Caco-2 (cell line): ENCODE measurements at regions of chr16 and their contacts with region 1.

Region 1: DNA sequence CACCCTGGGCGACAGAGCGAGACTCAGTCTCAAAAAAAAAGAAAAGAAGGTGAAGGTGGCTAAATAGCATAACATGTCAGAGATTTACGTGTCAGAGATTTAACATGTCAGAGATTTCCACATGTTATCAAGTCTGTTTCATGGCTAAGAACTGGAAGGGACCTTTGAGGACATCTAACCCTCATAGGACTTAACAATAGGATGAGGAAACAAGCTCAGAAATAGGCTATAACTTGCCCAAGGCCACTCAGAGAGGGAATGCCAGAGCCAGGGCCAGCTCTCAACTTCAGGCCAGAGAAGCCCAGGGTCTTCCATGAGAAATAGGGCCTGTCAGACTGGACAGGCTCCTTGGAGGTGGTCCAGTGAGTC is 26.8 kb upstream of the ZNF629 start:
- DNase-seq: no peak
- H3K4me3 ChIP-seq: peak overlapping the region; percentile 40
- H3K4me3 Mint-ChIP-seq: peak overlapping the region; percentile 95
- H3K27ac Mint-ChIP-seq: peak overlapping the region; percentile 97
- H3K4me1 ChIP-seq: 0 out of 2 replicates have a peak, but pooled peaks cover 4% of the 10 kb centered on the region
- H3K4me1 Mint-ChIP-seq: no peaks in the 10 kb centered on the region
- H3K27me3 ChIP-seq: no peaks in the 10 kb centered on the region
- H3K27me3 Mint-ChIP-seq: no peaks in the 10 kb centered on the region
- CTCF ChIP-seq: no peak

Region 2: GRCh38 chr16:30600215-30600614 is 213.6 kb before region 1 on chr16:
- CTCF ChIA-PET with region 1: no interaction called
- POLR2A ChIA-PET with region 1: no interaction called
- intact Hi-C with region 1: no loop called
- DNase-seq: no peak
- H3K4me3 ChIP-seq: no peak overlapping the region
- H3K4me3 Mint-ChIP-seq: no peak overlapping the region
- H3K27ac Mint-ChIP-seq: no peak overlapping the region
- H3K4me1 ChIP-seq: no peaks in the 10 kb centered on the region
- H3K4me1 Mint-ChIP-seq: no peaks in the 10 kb centered on the region
- H3K27me3 ChIP-seq: no peaks in the 10 kb centered on the region
- H3K27me3 Mint-ChIP-seq: no peaks in the 10 kb centered on the region
- CTCF ChIP-seq: no peak

Region 3: DNA sequence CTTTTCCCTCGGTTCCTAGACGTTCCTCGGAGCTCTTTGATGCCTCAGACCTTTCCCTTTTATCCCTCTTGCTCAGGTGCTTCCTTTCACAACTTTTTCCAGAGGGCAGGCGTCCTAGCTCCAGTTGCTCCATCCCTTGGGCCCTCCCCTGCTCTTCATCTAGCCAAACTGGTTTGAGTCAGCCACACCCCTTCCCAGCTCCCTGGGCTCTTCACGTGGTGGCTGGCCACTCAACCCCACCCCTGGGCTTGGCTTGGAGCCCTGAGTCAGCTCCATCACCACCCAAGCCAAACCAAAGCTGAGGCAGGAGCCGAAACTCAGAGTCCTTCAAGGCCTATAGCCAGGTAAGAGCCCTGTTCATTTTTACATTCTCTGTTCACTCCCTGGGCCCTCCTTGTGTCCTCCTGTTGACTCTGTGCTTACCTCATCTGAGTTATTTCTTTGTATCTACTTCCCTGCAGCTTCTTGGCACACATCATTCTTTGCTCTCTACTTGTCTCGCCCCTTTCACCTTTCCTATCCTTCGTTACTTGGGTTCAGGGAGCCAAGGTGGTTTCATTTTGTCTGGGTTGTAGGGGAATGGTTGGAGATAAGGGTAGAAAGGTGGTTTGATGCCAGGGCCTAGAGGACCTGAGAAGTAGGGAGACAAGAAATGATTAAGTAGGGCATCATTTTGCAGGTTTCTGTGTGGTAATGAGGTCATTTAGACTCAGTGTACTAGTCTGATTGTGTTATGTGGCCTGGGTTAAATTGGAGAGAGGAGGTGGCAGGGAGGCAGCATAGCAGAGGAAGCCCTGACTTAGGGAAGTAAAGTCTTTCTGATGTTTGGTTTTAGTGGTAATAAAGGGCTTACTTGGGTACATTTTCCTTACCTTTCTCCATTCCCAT is 73.2 kb before region 1 on chr16:
- CTCF ChIA-PET with region 1: no interaction called
- POLR2A ChIA-PET with region 1: no interaction called
- intact Hi-C with region 1: loop called (anchors 2 kb)
- DNase-seq: peak; percentile 92
- H3K4me3 ChIP-seq: peak overlapping the region; percentile 12; the same call in 1 of the 2 replicates
- H3K4me3 Mint-ChIP-seq: peak overlapping the region; percentile 59
- H3K27ac Mint-ChIP-seq: peak overlapping the region; percentile 90
- H3K4me1 ChIP-seq: peaks cover 27% of the 10 kb centered on the region
- H3K4me1 Mint-ChIP-seq: peaks cover 37% of the 10 kb centered on the region
- H3K27me3 ChIP-seq: no peaks in the 10 kb centered on the region
- H3K27me3 Mint-ChIP-seq: no peaks in the 10 kb centered on the region
- CTCF ChIP-seq: no peak

Region 4: DNA sequence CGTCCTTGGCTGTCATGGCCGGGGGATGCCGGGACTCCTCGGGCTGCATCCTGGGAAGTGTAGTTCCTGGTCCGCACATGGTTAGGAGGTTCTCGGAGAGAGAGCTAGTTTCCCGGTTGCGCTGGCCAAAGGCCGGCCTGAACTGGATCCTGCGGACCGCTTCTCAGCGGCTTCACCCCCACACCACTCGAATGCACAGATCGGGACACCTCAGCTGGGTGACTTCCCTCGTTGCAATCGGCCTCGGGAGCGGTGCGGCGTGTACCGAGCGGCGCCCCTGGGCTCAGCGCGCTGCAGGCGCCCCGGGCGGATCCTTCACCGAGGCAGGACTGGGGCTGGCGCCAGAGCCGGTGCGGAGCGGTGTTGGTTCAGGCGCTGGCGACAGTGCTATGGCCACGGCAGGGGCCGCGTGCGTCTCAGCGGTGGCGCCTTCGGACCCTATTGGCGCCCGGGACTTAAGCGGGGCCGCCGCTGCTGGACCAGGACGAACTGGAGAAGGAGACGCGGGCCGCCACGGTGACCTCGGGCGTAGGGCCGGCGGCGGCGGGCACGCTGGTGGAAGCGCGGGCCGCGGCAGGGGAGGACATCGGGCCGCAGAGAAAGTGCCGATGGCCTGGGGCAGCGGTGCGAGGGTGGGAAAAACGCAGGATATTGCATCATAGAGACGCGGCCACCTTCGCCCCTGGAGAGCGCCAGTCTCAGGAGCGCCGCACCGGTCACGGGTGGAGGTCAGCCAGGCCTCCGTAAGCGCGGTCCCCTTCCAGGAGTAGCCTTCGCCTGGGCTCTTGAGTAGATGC is 38.2 kb before region 1 on chr16:
- CTCF ChIA-PET with region 1: interaction called, 3 read pairs
- POLR2A ChIA-PET with region 1: no interaction called
- intact Hi-C with region 1: loop called (anchors 2 kb)
- DNase-seq: peak; percentile 86 to 87
- H3K4me3 ChIP-seq: peak overlapping the region; percentile 70
- H3K4me3 Mint-ChIP-seq: peak overlapping the region; percentile 75
- H3K27ac Mint-ChIP-seq: peak overlapping the region; percentile 91
- H3K4me1 ChIP-seq: peaks cover 12% of the 10 kb centered on the region
- H3K4me1 Mint-ChIP-seq: peaks cover 10% of the 10 kb centered on the region
- H3K27me3 ChIP-seq: no peaks in the 10 kb centered on the region
- H3K27me3 Mint-ChIP-seq: no peaks in the 10 kb centered on the region
- CTCF ChIP-seq: no peak

Region 5: GRCh38 chr16:30786936-30787612 is 26.7 kb before region 1 on chr16 and contains the start of gene ZNF629:
- CTCF ChIA-PET with region 1: interaction called, 4 read pairs
- POLR2A ChIA-PET with region 1: interaction called, 4 read pairs
- intact Hi-C with region 1: loop called (anchors 1 kb)
- DNase-seq: peak; percentile 79 to 82
- H3K4me3 ChIP-seq: peak within 1 kb of the TSS; percentile 72
- H3K4me3 Mint-ChIP-seq: peak within 1 kb of the TSS; percentile 93
- H3K27ac Mint-ChIP-seq: peak within 1 kb of the TSS; percentile 91
- H3K4me1 ChIP-seq: peaks cover 14% of the 10 kb centered on the region; the same call in 1 of the 2 replicates
- H3K4me1 Mint-ChIP-seq: no peaks in the 10 kb centered on the region
- H3K27me3 ChIP-seq: no peaks in the 10 kb centered on the region
- H3K27me3 Mint-ChIP-seq: no peaks in the 10 kb centered on the region
- CTCF ChIP-seq: no peak
- total RNA-seq, gene ZNF629: 18.9 and 20.6 TPM in 2 replicates

Region 6: DNA sequence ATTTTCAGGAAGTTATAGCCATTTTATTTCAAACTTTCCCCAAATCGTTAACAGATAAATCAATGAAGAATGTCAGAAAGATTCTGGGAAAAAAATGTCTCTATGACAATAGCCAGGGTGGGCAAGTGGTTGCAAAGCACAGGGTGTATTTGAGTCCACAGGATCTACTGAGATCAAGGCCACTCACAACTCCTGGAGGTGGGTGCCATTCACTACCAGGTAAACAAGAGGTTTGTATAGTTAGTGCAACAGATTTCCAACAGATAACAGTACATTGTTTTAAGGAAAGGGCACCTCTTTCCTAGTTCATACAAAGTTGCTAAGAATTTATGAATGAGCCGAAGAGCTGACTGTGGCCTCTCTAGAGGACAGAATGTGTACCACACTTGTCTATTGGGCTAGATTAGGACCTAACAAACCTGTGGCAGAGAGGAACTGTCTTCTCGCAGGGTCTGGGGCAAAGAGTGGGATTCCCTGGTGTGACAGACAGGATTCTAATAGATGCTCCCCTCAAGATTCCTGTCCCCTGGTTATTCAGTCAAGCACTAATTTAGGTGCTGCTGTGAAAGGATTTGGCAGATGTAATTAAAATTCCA is 25.2 kb after region 1 on chr16:
- CTCF ChIA-PET with region 1: interaction called, 14 read pairs
- POLR2A ChIA-PET with region 1: interaction called, 3 read pairs
- intact Hi-C with region 1: loop called (anchors 1 kb)
- DNase-seq: peak in 1 of 2 experiments; percentile 23
- H3K4me3 ChIP-seq: no peak overlapping the region
- H3K4me3 Mint-ChIP-seq: peak overlapping the region; percentile 47
- H3K27ac Mint-ChIP-seq: peak overlapping the region; percentile 71
- H3K4me1 ChIP-seq: peaks cover 33% of the 10 kb centered on the region
- H3K4me1 Mint-ChIP-seq: peaks cover 6% of the 10 kb centered on the region
- H3K27me3 ChIP-seq: no peaks in the 10 kb centered on the region
- H3K27me3 Mint-ChIP-seq: no peaks in the 10 kb centered on the region
- CTCF ChIP-seq: peak; percentile 20 to 25